A549 (cell line): ENCODE measurements at regions of chr9 and their contacts with region 1.

Region 1: DNA sequence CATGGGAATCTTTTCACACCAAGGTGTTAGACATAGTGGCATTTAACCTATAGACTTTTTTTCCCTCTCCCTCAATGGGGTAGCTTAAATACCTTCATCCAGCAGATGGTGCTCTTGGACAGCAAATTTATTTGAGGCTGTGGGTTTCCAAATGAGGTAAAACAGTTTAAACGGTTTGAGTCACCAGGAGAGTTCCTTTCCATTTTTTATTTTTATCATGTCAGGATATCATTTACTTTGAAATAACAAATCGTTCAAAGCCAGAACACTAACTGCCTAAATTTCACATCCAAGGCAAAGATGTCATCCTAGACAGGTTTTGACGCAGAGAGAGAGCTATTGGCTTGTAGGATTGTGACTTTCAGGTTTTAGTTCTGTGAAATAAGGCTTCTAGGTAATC is 69.7 kb downstream of the KDM4C start:
- DNase-seq: peak; percentile 47 to 51
- ATAC-seq: peak; percentile 71 to 86; a peak in 5 of 6 replicates
- H3K4me3 ChIP-seq: no peak overlapping the region
- H3K27ac ChIP-seq: no peak overlapping the region
- H3K4me1 ChIP-seq: no peaks in the 10 kb centered on the region
- CTCF ChIP-seq: peak; percentile 82
- EP300 ChIP-seq: no peak
- POLR2A ChIP-seq: no peak
- RAD21 ChIP-seq: peak; percentile 84 to 87

Region 2: GRCh38 chr9:6838158-6838557 is 10.7 kb after region 1 on chr9:
- CTCF ChIA-PET with region 1: interaction called, 29 read pairs
- POLR2A ChIA-PET with region 1: no interaction called
- DNase-seq: no peak
- ATAC-seq: no peak
- H3K4me3 ChIP-seq: no peak overlapping the region
- H3K27ac ChIP-seq: no peak overlapping the region
- H3K4me1 ChIP-seq: peaks cover 16% of the 10 kb centered on the region; the same call in 2 of the 3 replicates
- CTCF ChIP-seq: no peak
- EP300 ChIP-seq: no peak
- POLR2A ChIP-seq: no peak
- RAD21 ChIP-seq: no peak

Region 3: DNA sequence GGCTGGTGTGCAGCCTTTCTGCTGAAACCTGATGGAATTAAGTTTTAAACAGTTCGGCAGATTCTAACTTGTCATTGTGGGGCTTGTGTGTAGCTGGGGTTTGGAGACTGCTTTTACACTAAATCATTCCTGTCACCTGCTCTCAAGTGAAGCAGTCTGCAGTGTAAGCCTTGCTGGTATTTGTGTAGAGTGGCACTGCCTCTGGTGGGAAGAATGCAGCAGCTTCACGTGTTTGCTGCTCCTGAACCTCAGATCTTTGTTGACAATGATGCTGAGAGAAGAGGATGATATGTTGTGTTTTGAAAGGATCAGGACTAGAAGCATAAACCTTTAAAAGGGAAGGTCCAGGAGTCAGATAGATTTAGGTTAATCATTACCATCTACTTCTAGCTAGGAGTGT is 18.4 kb after region 1 on chr9:
- CTCF ChIA-PET with region 1: interaction called, 29 read pairs
- POLR2A ChIA-PET with region 1: no interaction called
- DNase-seq: peak; percentile 35 to 59
- ATAC-seq: peak; percentile 91 to 92
- H3K4me3 ChIP-seq: no peak overlapping the region
- H3K27ac ChIP-seq: no peak overlapping the region
- H3K4me1 ChIP-seq: peaks cover 12% of the 10 kb centered on the region; the same call in 2 of the 3 replicates
- CTCF ChIP-seq: peak; percentile 39; the same call in 2 of the 3 replicates
- EP300 ChIP-seq: no peak
- POLR2A ChIP-seq: no peak
- RAD21 ChIP-seq: peak in 1 of 2 experiments; percentile 31; a peak in 2 of 5 replicates

Region 4: DNA sequence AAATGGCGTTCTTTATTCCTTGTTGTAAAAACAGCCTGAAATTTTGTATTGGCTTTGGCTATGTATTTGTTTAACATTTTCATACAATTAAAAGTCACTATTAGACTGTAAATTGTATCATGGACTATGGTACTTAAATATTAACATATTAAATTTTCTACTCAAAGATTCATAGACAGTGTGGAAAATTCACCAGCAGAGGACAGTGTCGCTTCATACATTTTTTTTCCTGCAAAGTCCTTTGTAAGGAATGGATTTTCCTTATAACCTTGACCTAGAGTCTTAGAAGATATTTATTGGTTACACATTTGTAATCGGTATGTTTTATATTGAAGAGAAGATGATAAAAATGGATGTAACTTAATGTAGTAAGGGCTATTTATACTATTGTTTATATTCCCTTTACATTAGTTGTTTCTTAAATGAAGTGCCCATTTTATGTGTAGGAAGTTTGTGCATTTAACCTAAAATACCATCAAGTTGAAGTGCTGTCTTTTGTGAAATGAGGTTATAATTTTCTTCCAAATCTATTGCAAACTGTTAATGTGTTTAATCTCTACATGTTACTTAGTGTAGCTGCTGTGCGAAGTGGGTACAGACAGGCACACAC is 80.4 kb after region 1 on chr9:
- CTCF ChIA-PET with region 1: interaction called, 12 read pairs
- POLR2A ChIA-PET with region 1: no interaction called
- DNase-seq: peak; percentile 15 to 49
- ATAC-seq: peak in 1 of 2 experiments; percentile 71; a peak in 3 of 6 replicates
- H3K4me3 ChIP-seq: no peak overlapping the region
- H3K27ac ChIP-seq: no peak overlapping the region
- H3K4me1 ChIP-seq: peaks cover 3% of the 10 kb centered on the region; the same call in 1 of the 3 replicates
- CTCF ChIP-seq: peak; percentile 88
- EP300 ChIP-seq: no peak
- POLR2A ChIP-seq: no peak
- RAD21 ChIP-seq: peak; percentile 79 to 81